ENCODE measurements at regions of chr19 and their contacts with region 1.

Region 1: DNA sequence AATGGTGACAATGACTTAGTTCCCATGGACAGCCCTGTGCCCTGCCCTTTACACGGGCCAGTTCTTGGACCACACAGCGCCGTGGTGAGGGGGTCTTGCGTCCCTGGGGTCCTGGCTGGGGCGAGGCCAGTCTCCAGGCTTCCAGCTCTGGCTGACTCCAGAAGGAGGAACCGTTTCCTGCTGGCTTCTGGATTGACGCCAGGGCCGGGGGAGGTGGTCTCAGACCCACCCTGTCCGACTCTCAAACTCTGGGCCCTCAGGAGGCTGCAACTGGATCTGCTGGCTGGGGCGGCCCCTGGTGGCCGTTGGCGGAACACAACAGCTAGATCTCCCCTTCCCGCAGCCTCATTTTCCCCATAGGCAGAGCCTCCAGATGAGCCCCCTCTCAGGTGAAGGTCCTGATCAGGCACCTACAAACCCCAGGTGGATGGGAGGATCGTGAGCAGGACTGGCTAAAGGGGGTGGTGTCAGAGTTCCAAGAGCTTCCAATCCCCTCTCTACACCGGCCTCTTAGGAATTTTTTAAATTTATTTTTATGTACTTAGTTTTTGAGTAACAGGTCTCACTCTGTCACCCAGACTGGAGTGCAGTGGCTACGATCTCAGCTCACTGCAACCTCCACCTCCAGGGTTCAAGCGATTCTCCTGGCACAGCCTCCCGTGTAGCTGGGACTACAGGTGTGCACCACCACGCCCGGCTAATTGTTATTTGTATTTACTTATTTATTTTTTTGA is 8.0 kb downstream of the CCDC194 start:
- DNase-seq: peak; percentile 90
- H3K4me3 ChIP-seq: no peak overlapping the region
- H3K27ac ChIP-seq: no peak overlapping the region
- H3K4me1 ChIP-seq: peaks cover 9 to 48% (median 36%) of the 10 kb centered on the region in 6 donors
- H3K27me3 ChIP-seq: peaks cover 0 to 14% (median 0%) of the 10 kb centered on the region in 7 donors
- CTCF ChIP-seq: peak; percentile 61 to 91 (median 84)
- POLR2A ChIP-seq: no peak

Region 2: DNA sequence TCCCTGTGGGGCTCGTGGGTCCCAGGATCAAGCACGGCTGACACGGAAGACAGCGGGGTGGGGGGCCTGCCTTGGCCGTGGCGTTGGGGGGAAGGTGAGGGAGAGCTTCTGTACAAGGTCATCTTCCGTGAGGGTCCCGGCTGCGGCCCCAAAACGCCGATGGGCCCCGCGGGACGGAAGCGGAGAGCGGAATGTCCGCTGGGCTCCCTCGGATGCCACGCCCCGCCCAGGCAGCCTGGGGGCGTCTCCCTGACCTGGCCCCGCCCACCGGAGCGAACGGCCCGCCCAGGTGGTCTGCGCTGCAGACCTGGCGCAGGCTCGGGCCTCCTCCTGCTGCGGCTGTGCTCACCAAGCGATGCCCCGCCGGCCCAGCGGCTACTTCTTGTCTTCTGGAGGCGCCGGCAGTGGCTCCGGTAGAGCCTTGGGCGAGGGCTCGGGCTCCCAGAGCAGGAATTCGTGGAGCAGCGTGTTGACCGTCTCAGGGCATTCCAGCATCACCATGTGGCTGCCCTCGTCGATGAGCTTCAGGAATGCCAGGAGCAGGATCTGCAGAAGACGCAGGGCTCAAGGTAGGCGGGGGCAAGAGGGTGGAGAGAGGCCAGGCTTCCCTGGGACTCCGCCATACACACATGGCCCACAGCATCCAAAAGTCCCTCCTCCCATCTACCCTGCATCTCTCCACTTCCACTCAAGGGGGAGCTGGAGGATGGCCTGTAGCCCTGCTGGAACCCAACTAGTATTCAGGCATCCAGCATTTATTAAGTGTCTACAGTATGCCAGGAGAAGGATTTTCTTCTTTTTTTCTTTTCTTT is 93.6 kb before region 1 on chr19:
- intact Hi-C with region 1: loop called (anchors 5 kb)
- DNase-seq: peak; percentile 94
- H3K4me3 ChIP-seq: peak overlapping the region; percentile 63 to 85 (median 71)
- H3K27ac ChIP-seq: peak overlapping the region; percentile 35 to 84 (median 76)
- H3K4me1 ChIP-seq: peaks cover 0 to 49% (median 16%) of the 10 kb centered on the region in 6 donors
- H3K27me3 ChIP-seq: peaks cover 0 to 8% (median 0%) of the 10 kb centered on the region in 7 donors
- CTCF ChIP-seq: peak; percentile 53 to 87 (median 75)
- POLR2A ChIP-seq: no peak

Region 3: GRCh38 chr19:17346109-17346671 is 39.9 kb before region 1 on chr19:
- intact Hi-C with region 1: loop called (anchors 5 kb)
- DNase-seq: peak; percentile 93
- H3K4me3 ChIP-seq: no peak overlapping the region
- H3K27ac ChIP-seq: peak overlapping the region in 6 of 8 donors; percentile 48 to 75 (median 64)
- H3K4me1 ChIP-seq: peaks cover 9 to 52% (median 40%) of the 10 kb centered on the region in 6 donors
- H3K27me3 ChIP-seq: peaks cover 0 to 42% (median 3%) of the 10 kb centered on the region in 7 donors
- CTCF ChIP-seq: peak; percentile 88 to 98 (median 95)
- POLR2A ChIP-seq: no peak

Region 4: DNA sequence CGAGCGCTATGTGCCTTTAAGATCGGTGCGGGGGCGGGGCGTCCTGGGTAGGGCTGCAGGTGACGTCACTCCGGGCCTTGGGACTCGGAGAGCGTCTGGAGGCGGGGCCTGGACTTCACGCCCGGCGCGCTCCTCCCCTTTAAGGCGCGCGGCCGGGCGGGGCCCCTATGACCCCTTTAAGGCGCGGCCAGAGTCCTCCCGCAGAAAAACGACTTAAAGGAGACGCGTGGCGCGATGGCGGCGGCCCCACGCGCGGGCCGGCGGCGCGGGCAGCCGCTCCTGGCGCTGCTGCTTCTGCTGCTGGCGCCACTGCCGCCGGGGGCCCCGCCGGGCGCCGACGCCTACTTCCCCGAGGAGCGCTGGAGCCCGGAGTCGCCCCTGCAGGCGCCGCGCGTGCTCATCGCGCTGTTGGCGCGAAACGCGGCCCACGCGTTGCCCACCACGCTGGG is 169.5 kb after region 1 on chr19 and contains the start of gene COLGALT1:
- intact Hi-C with region 1: no loop called
- DNase-seq: peak; percentile 100
- H3K4me3 ChIP-seq: peak within 1 kb of the TSS; percentile 86 to 99 (median 96)
- H3K27ac ChIP-seq: peak within 1 kb of the TSS; percentile 63 to 96 (median 91)
- H3K4me1 ChIP-seq: peaks cover 11 to 72% (median 53%) of the 10 kb centered on the region in 6 donors
- H3K27me3 ChIP-seq: no peaks in the 10 kb centered on the region
- CTCF ChIP-seq: peak in 2 of 11 experiments; percentile 23 to 25
- POLR2A ChIP-seq: peak in 2 of 3 donors; percentile 26 to 29
- total RNA-seq, gene COLGALT1: 89.4 to 146 (median 116) TPM

Measured in spleen (tissue), 13 donors.